Activated CD8-positive, alpha-beta T cell treated with anti-CD3 and anti-CD28 coated beads, Interleukin-2, amount 10 ng/mL, durations not matched to agents 7 days and 5 days (primary cell): ENCODE measurements at regions of chr1 and their contacts with region 1.

Region 1: GRCh38 chr1:192516776-192517297 is 58.7 kb upstream of the RGS1 start:
- DNase-seq: peak; percentile 74
- ATAC-seq: peak; percentile 98
- H3K4me3 Mint-ChIP-seq: peak overlapping the region; percentile 67
- H3K27ac Mint-ChIP-seq: peak overlapping the region; percentile 86
- H3K4me1 Mint-ChIP-seq: peaks cover 48% of the 10 kb centered on the region
- H3K27me3 Mint-ChIP-seq: no peaks in the 10 kb centered on the region

Region 2: GRCh38 chr1:192477630-192478029 is 39.2 kb before region 1 on chr1:
- CTCF ChIA-PET with region 1: interaction called, 17 read pairs
- POLR2A ChIA-PET with region 1: no interaction called
- DNase-seq: no peak
- ATAC-seq: peak; percentile 55
- H3K4me3 Mint-ChIP-seq: no peak overlapping the region
- H3K27ac Mint-ChIP-seq: no peak overlapping the region
- H3K4me1 Mint-ChIP-seq: no peaks in the 10 kb centered on the region
- H3K27me3 Mint-ChIP-seq: peaks cover 7% of the 10 kb centered on the region

Region 3: GRCh38 chr1:192539297-192540092 is 22.7 kb after region 1 on chr1:
- CTCF ChIA-PET with region 1: interaction called, 51 read pairs
- POLR2A ChIA-PET with region 1: interaction called, 19 read pairs
- DNase-seq: no peak
- ATAC-seq: peak; percentile 38
- H3K4me3 Mint-ChIP-seq: peak overlapping the region; percentile 61
- H3K27ac Mint-ChIP-seq: peak overlapping the region; percentile 90
- H3K4me1 Mint-ChIP-seq: peaks cover 30% of the 10 kb centered on the region
- H3K27me3 Mint-ChIP-seq: no peaks in the 10 kb centered on the region

Region 4: DNA sequence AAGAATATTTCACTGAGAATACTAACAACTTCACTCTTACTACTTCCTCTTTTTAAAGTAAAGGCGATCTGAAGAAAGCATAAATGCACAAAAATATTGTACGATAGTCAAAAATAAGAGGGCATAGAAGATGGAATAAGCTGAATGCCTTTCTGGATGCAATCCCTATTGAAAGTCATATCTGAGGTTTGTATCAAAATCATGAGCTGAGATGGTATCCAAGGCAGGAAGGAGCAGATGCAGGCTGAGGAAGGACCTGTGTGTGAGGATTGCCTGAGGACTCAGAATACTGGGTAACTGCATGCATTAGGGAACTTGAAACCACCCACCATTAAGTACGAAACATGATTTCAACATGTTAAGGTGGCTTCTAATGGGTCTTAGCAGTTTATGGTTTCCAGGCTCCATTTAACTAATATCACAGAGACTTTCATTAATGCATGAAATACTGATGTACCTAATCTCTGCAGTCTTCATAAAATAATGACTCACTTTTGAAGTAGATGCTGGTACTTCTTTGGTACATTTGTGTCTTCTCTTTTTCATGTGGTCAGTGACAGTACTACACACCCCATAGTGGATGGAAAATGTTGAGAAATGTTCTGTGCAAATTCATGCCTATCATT is 29.2 kb after region 1 on chr1:
- CTCF ChIA-PET with region 1: interaction called, 51 read pairs
- POLR2A ChIA-PET with region 1: interaction called, 7 read pairs
- DNase-seq: no peak
- ATAC-seq: peak; percentile 45
- H3K4me3 Mint-ChIP-seq: no peak overlapping the region
- H3K27ac Mint-ChIP-seq: no peak overlapping the region
- H3K4me1 Mint-ChIP-seq: peaks cover 37% of the 10 kb centered on the region
- H3K27me3 Mint-ChIP-seq: no peaks in the 10 kb centered on the region